Head of caudate nucleus (tissue), 42 donors: ENCODE measurements at regions of chr14 and their contacts with region 1.

Region 1: GRCh38 chr14:76090616-76091391 is 60.9 kb upstream of the GPATCH2L start:
- DNase-seq: peak in 41 of 42 donors; percentile 22 to 80 (median 57)

Region 2: DNA sequence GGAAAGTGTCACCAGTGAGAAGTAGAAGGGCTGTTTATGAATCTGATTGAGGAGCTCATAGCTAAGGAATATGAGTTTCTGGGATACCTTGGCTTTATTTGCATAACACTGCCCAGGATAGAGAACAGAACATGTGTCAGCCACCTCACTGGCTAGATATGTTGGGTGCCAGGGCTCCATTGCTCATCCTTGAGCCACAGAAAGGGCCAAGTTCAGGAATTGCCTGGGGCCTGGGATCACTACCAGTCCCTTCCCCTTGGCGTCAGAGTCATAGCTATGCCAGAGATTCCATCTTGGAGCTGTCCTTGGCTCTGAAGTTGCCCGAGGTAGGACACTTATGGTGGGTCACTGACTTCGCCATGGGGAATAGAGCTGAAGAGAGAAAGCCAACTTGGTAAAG is 56.2 kb before region 1 on chr14:
- intact Hi-C with region 1: no loop called
- DNase-seq: no peak

Region 3: GRCh38 chr14:76050797-76051392 is 39.9 kb before region 1 on chr14:
- intact Hi-C with region 1: loop called (anchors 5 kb)
- DNase-seq: peak in 39 of 42 donors; percentile 21 to 92 (median 73)

Region 4: DNA sequence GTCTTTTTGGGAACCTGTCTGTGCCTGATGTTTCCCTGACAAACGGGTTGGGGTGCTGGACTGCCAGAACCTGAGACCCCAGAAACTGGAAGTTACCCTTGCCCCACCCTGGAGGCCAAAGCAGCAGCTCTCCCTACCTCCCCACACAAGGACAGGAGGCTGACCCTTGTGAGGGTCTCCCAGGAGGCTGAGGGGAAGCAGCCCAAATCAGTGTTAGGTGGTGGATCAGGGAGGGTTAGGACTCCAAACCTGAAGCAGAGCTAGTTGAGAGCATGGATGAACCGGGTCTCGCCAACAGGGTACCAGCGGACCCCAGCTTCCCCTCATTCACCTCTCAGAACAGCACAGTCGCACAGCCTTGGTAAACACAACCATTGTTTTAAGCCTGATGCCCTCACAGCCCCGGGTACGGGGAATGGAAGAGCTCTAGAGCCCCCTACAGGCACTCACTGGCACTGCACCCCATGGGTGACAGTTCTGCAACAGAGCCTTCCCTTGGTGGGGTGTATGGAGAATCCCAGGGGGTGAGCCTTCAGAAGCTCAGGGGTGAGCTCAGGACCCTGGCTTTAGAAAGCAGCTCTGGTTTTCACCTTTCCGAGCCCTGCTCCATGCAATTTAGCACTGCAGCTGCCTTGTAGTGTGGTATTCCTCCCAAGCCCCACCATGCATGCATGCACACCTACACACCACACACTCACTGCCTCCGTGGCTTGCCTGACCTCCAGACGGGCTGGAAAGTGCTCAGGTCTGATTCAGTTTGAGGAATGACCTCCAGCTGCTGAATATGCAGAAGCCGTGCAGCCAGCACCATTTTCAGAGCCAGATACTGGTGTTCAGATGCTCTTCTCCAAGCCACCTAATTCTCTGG is 296.3 kb after region 1 on chr14:
- intact Hi-C with region 1: no loop called
- DNase-seq: peak; percentile 55 to 91 (median 82)